GM12878 (cell line): ENCODE measurements at regions of chr17 and their contacts with region 1.

Region 1: GRCh38 chr17:32512328-32512727 is 25.5 kb downstream of the CDK5R1 start:
- DNase-seq: no peak
- ATAC-seq: no peak
- H3K4me3 ChIP-seq: no peak overlapping the region
- H3K27ac ChIP-seq: no peak overlapping the region
- H3K4me1 ChIP-seq: peaks cover 28% of the 10 kb centered on the region
- H3K27me3 ChIP-seq: no peaks in the 10 kb centered on the region
- CTCF ChIP-seq: no peak
- EP300 ChIP-seq: no peak
- POLR2A ChIP-seq: no peak
- RAD21 ChIP-seq: no peak

Region 2: GRCh38 chr17:32495359-32496231 is 16.7 kb before region 1 on chr17:
- CTCF ChIA-PET with region 1: interaction called, 28 read pairs
- POLR2A ChIA-PET with region 1: interaction called, 308 read pairs
- RAD21 ChIA-PET with region 1: interaction called, 543 read pairs
- SMC1A ChIA-PET with region 1: interaction called, 286 read pairs
- in situ Hi-C with region 1: no loop called
- intact Hi-C with region 1: no loop called
- DNase-seq: no peak
- ATAC-seq: peak; percentile 49
- H3K4me3 ChIP-seq: no peak overlapping the region
- H3K27ac ChIP-seq: no peak overlapping the region
- H3K4me1 ChIP-seq: peaks cover 29% of the 10 kb centered on the region
- H3K27me3 ChIP-seq: no peaks in the 10 kb centered on the region
- CTCF ChIP-seq: no peak
- EP300 ChIP-seq: no peak
- POLR2A ChIP-seq: no peak
- RAD21 ChIP-seq: no peak